ENCODE measurements at regions of chr11 and their contacts with region 1.

Region 1: DNA sequence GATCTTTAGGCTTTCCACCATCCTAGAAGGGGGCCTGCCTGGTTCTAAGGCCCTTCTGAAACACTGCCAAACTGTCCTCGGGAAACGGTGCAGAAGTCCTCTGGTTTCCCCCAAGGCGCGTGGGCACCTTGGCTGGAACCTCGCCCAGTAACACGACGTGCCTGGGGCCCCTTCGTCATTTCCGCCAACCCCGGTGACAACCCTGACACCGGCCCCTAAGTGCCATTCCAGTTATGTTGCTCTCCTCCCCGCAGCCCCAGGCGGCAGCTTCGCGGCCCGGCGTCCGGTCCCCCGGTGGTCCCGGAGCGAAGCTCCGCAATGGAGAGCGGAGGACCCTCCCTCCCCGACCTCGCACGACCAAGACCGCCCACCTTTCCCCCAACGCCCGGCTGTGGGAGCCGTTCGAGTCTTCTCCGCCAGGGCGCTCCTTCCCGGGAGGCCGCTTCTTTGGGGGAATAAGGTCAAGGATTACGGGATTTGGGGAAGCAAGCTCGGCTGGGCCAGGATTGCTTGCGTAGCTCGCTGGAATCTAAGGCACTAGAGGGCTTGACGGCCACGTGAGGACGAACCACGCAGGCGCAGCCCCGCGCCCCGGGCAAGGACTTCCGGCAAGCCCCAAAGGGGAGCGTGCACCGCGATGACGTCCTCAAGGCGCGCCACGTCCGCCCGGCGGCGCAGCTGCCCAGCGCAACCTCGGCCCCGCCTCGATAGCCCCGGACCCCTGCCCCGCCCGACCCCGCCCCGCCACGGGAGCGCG is 626 bp downstream of the RNH1 start:
- DNase-seq: peak; percentile 97
- H3K4me3 Mint-ChIP-seq: peak overlapping the region; percentile 92
- H3K27ac Mint-ChIP-seq: peak overlapping the region; percentile 100
- H3K4me1 Mint-ChIP-seq: peaks cover 15% of the 10 kb centered on the region
- H3K27me3 Mint-ChIP-seq: no peaks in the 10 kb centered on the region

Region 2: DNA sequence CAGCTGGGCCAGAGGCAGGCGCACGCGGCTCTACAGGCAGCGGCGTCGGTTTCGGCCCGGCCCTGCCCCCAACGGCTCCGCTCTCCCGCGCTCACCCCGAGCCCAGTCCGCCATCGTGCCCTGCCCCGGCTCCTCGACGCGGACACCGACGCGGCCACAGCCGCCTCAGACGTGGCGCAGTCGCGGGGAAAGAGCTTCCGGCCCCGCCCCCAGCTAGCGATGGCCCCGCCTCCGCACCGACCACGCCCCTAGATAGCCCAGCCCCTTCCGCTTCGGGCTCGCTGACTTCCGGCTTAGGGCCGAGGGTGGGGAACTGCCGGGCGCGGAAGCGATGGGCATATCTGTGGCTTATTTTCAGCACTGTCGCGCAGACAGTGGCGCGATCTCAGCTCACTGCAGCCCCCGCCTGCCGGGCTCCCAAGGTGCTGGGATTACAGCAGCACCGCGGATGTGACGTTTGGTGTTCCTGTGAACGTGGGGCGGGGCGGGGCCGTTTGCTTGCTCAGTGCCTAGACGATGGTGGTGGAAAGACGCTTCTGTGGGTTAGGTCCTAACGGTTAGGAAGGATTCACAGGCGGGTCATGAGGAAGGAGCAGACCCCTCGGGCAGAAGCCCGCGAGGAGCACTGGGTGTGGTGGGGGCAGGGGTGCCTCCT is 299.1 kb before region 1 on chr11 and contains the starts of genes BET1L and RIC8A:
- intact Hi-C with region 1: loop called (anchors 1 kb)
- DNase-seq: peak; percentile 97
- H3K4me3 Mint-ChIP-seq: peak within 1 kb of the TSS; percentile 89
- H3K27ac Mint-ChIP-seq: peak within 1 kb of the TSS; percentile 98
- H3K4me1 Mint-ChIP-seq: peaks cover 55% of the 10 kb centered on the region
- H3K27me3 Mint-ChIP-seq: no peaks in the 10 kb centered on the region
- total RNA-seq, gene BET1L: 42.0 and 48.7 TPM in 2 replicates
- total RNA-seq, gene RIC8A: 132 and 149 TPM in 2 replicates

Region 3: DNA sequence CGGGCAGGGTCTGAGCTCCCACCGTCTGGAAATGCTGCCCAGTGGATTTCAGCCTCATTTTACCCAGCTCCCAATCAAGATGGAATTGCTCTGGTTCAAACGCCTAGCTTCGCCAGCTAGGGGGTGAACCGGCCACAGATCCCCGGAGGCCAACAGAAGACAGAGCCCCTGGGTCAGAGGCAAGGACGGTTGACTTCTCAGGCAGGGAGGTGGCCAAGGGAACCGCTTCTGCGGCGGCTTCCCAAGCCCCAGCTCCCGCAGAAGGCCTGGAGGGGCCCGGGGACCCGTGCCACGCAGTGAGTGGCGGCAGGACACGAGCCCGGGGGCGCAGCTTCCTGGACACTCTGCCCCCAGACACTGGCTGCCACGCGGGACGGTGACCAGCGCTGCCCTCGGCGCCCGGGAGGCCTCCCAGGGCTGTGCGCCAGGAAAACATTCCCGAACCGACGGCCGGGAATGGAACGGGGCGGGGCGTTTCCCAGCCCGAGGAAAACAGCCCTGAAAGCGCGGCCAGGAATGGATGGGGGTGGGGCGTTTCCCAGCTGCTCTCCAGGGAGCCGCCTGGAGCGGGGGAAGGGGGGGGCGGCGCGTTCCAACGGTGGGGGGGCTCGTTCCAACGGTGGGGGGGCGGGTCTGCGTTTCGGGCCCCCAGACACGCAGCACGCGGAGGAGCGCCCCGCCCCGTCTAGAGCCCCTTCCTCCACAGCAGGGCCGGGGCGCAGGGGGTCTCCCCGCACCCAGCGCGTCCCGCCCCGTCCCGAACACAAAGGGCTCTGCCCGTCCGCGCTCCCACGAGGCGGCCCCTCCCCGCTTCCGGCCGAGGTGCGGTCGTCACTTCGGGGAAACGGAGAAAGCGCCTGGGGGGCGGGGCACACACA is 150.6 kb before region 1 on chr11:
- intact Hi-C with region 1: loop called (anchors 5 kb)
- DNase-seq: peak; percentile 85
- H3K4me3 Mint-ChIP-seq: peak overlapping the region; percentile 86
- H3K27ac Mint-ChIP-seq: peak overlapping the region; percentile 93
- H3K4me1 Mint-ChIP-seq: peaks cover 26% of the 10 kb centered on the region
- H3K27me3 Mint-ChIP-seq: peaks cover 4% of the 10 kb centered on the region

Region 4: DNA sequence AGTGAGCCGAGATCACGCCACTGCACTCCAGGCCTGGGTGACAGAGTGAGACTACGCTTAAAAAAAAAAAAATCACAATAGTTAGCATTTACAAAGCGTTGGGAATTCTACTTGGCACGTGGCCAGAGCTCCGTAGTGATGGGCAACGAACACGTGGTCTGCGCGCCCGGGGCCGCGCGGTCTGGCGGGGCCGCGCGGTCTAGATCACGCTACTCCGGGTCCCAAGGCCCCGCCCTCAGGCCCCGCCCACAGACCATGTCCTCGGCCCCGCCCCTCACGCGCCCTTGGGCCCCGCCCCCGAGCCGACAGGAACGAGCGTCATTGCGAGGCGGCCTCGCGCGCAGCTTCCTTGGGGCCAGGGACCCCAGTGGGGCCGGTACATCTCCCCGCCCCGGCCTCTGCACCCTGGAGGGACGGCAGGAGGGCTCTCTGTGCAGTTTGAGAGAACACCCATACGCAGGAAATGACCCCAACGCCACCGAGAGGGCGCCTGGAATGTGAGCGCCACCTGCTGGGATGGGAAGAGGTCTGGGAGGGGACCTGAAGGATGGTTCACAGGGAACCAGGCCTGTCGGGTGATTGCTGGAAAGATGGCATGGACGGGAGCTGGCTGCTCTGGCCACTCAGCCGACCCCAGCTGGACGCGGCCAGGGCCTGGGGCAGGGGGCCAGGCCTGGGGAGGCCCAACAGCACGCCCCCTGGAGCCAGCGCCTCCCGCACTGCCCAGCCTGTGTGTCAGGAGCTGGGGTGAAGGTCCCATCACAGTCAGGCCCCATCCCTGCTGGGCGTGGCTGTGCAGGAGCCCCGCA is 58.3 kb before region 1 on chr11:
- intact Hi-C with region 1: loop called (anchors 1 kb)
- DNase-seq: peak; percentile 92
- H3K4me3 Mint-ChIP-seq: peak overlapping the region; percentile 88
- H3K27ac Mint-ChIP-seq: peak overlapping the region; percentile 91
- H3K4me1 Mint-ChIP-seq: peaks cover 16% of the 10 kb centered on the region
- H3K27me3 Mint-ChIP-seq: no peaks in the 10 kb centered on the region

Region 5: GRCh38 chr11:554824-555472 is 48.5 kb after region 1 on chr11:
- intact Hi-C with region 1: loop called (anchors 1 kb)
- DNase-seq: peak; percentile 71
- H3K4me3 Mint-ChIP-seq: no peak overlapping the region
- H3K27ac Mint-ChIP-seq: no peak overlapping the region
- H3K4me1 Mint-ChIP-seq: peaks cover 4% of the 10 kb centered on the region
- H3K27me3 Mint-ChIP-seq: peaks cover 10% of the 10 kb centered on the region

Region 6: GRCh38 chr11:798093-798713 is 291.8 kb after region 1 on chr11 and contains the start of gene SLC25A22:
- intact Hi-C with region 1: loop called (anchors 2 kb)
- DNase-seq: peak; percentile 84
- H3K4me3 Mint-ChIP-seq: peak within 1 kb of the TSS; percentile 93
- H3K27ac Mint-ChIP-seq: peak within 1 kb of the TSS; percentile 82
- H3K4me1 Mint-ChIP-seq: peaks cover 4% of the 10 kb centered on the region
- H3K27me3 Mint-ChIP-seq: no peaks in the 10 kb centered on the region
- total RNA-seq, gene SLC25A22: 87.6 and 92.0 TPM in 2 replicates

Measured in activated T-helper 1 cell treated with anti-CD3 and anti-CD28 coated beads, Interleukin-12 subunit alpha, Interleukin-12 subunit beta, Interleukin-2, Interleukin-4 antibody, amounts not matched to agents 30 ng/mL and 10 ng/mL and 1 ng/mL, durations not matched to agents 14 hours and 24 hours and 36 hours (primary cell).